Activated CD4-positive, alpha-beta memory T cell treated with anti-CD3 and anti-CD28 coated beads for 36 hours (primary cell): ENCODE measurements at regions of chr12 and their contacts with region 1.

Region 1: DNA sequence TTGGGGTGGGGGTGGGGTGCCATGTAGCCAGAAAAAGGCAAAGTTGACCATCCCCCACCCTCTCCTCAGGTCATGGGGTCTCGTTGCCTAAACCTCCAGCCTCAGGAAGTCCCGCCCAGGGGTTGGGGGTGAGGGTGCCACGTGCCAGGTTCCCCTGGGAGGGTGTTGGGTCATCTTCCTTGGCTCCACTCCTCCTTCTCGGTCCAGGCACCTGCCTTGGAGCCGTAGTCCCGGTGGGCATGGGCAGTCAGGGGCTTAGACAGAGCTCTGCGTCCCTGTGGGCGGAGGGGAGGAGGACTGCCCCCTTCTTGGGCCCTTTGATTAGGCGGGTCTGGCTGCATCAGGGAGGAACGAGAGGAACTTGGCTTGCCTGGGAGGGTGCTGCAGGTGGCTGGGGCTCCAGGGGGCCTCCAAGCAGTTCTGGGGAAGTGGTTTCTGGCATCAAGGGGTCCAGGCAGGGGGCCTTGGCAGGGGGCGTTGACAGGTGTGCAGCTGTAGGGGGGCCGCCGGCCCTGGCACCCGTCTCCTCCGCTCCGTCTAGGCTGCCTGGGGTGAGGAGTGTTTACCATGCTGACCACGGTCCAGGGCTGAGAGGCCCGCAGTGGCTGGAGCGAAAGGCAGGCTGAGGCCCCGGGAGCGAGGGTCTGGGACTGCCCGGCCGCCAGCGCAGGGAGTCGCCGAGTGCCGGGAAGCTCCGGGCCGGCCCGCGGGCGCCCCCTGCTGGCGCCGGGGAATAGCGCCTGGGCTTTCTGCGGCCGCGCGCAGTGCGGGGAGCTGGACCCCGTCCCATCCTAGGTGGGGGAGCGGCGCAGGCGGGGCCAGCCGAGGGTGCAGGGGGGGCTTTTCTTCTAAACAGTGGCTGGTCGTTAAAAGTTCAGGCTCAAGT is 7.9 kb downstream of the SETD1B start:
- DNase-seq: peak; percentile 77
- H3K4me3 Mint-ChIP-seq: peak overlapping the region; percentile 79
- H3K27ac Mint-ChIP-seq: peak overlapping the region; percentile 78
- H3K4me1 Mint-ChIP-seq: peaks cover 44% of the 10 kb centered on the region
- H3K27me3 Mint-ChIP-seq: no peaks in the 10 kb centered on the region

Region 2: GRCh38 chr12:121678716-121679580 is 132.7 kb before region 1 on chr12:
- CTCF ChIA-PET with region 1: no interaction called
- POLR2A ChIA-PET with region 1: no interaction called
- intact Hi-C with region 1: no loop called
- DNase-seq: no peak
- H3K4me3 Mint-ChIP-seq: no peak overlapping the region
- H3K27ac Mint-ChIP-seq: no peak overlapping the region
- H3K4me1 Mint-ChIP-seq: peaks cover 9% of the 10 kb centered on the region
- H3K27me3 Mint-ChIP-seq: no peaks in the 10 kb centered on the region

Region 3: DNA sequence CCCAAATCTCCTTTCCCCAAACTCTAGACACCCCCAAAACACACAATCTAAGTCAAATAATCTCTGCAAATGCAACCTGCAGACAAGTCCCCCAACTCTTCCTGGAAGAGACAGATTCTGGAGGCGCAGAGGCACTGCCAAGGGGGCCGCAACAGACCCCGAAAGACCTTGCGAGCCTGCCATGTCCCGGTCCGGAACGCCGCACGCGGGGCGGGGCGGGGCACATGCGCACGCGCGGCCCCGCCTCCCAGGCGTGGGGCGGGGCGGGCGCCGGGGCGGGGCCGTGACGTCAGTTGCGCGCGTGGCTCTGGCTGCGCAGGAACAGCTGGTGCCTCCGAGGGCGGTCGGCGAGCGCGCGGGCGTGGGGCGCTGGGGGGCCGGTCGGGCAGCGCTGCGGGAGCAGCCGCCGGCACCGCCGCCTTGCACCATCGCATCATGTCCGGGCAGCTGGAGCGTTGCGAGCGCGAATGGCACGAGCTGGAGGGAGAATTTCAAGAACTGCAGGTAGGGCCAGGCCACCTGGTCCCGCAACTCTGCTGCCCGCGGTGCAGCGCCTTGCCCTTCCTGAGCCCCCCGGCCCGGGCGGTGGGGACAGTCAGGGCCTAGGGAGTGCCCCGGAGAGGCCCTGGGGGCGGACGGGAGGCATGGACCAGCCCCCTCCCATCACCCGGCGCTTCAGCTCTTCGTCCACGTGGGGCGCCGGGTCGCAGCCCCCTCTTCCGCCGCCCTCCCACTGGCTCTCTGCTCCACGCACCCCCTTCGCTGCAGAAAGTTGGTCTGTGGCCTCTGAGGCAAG is 99.0 kb before region 1 on chr12 and contains the start of gene TMEM120B:
- CTCF ChIA-PET with region 1: interaction called, 12 read pairs
- POLR2A ChIA-PET with region 1: no interaction called
- intact Hi-C with region 1: no loop called
- DNase-seq: peak; percentile 86
- H3K4me3 Mint-ChIP-seq: peak within 1 kb of the TSS; percentile 89
- H3K27ac Mint-ChIP-seq: peak within 1 kb of the TSS; percentile 59
- H3K4me1 Mint-ChIP-seq: peaks cover 16% of the 10 kb centered on the region
- H3K27me3 Mint-ChIP-seq: no peaks in the 10 kb centered on the region
- total RNA-seq, gene TMEM120B: 8.8 to 9.5 TPM

Region 4: GRCh38 chr12:121724930-121725329 is 86.7 kb before region 1 on chr12:
- CTCF ChIA-PET with region 1: no interaction called
- POLR2A ChIA-PET with region 1: no interaction called
- intact Hi-C with region 1: no loop called
- DNase-seq: no peak
- H3K4me3 Mint-ChIP-seq: no peak overlapping the region
- H3K27ac Mint-ChIP-seq: no peak overlapping the region
- H3K4me1 Mint-ChIP-seq: no peaks in the 10 kb centered on the region
- H3K27me3 Mint-ChIP-seq: no peaks in the 10 kb centered on the region

Region 5: GRCh38 chr12:121773011-121773777 is 38.5 kb before region 1 on chr12:
- CTCF ChIA-PET with region 1: interaction called, 32 read pairs
- POLR2A ChIA-PET with region 1: interaction called, 5 read pairs
- intact Hi-C with region 1: loop called (anchors 5 kb)
- DNase-seq: peak; percentile 87
- H3K4me3 Mint-ChIP-seq: no peak overlapping the region
- H3K27ac Mint-ChIP-seq: peak overlapping the region; percentile 54
- H3K4me1 Mint-ChIP-seq: peaks cover 8% of the 10 kb centered on the region
- H3K27me3 Mint-ChIP-seq: no peaks in the 10 kb centered on the region

Region 6: GRCh38 chr12:121781998-121782979 is 29.4 kb before region 1 on chr12:
- CTCF ChIA-PET with region 1: interaction called, 856 read pairs
- POLR2A ChIA-PET with region 1: interaction called, 8 read pairs
- intact Hi-C with region 1: loop called (anchors 5 kb)
- DNase-seq: peak; percentile 88
- H3K4me3 Mint-ChIP-seq: peak overlapping the region; percentile 68
- H3K27ac Mint-ChIP-seq: peak overlapping the region; percentile 96
- H3K4me1 Mint-ChIP-seq: peaks cover 70% of the 10 kb centered on the region
- H3K27me3 Mint-ChIP-seq: no peaks in the 10 kb centered on the region

Region 7: GRCh38 chr12:121829250-121829918 is 17.7 kb after region 1 on chr12:
- CTCF ChIA-PET with region 1: interaction called, 11 read pairs
- POLR2A ChIA-PET with region 1: no interaction called
- intact Hi-C with region 1: no loop called
- DNase-seq: no peak
- H3K4me3 Mint-ChIP-seq: no peak overlapping the region
- H3K27ac Mint-ChIP-seq: no peak overlapping the region
- H3K4me1 Mint-ChIP-seq: peaks cover 13% of the 10 kb centered on the region
- H3K27me3 Mint-ChIP-seq: no peaks in the 10 kb centered on the region

Region 8: GRCh38 chr12:121839106-121839992 is 27.7 kb after region 1 on chr12:
- CTCF ChIA-PET with region 1: interaction called, 20 read pairs
- POLR2A ChIA-PET with region 1: interaction called, 3 read pairs
- intact Hi-C with region 1: no loop called
- DNase-seq: peak; percentile 100
- H3K4me3 Mint-ChIP-seq: peak overlapping the region; percentile 99
- H3K27ac Mint-ChIP-seq: peak overlapping the region; percentile 92
- H3K4me1 Mint-ChIP-seq: peaks cover 15% of the 10 kb centered on the region
- H3K27me3 Mint-ChIP-seq: no peaks in the 10 kb centered on the region

Region 9: GRCh38 chr12:121858662-121859572 is 47.2 kb after region 1 on chr12 and contains the start of gene HPD:
- CTCF ChIA-PET with region 1: no interaction called
- POLR2A ChIA-PET with region 1: no interaction called
- intact Hi-C with region 1: no loop called
- DNase-seq: no peak
- H3K4me3 Mint-ChIP-seq: no peak within 1 kb of the TSS
- H3K27ac Mint-ChIP-seq: no peak within 1 kb of the TSS
- H3K4me1 Mint-ChIP-seq: no peaks in the 10 kb centered on the region
- H3K27me3 Mint-ChIP-seq: no peaks in the 10 kb centered on the region
- total RNA-seq, gene HPD: not detected

Region 10: DNA sequence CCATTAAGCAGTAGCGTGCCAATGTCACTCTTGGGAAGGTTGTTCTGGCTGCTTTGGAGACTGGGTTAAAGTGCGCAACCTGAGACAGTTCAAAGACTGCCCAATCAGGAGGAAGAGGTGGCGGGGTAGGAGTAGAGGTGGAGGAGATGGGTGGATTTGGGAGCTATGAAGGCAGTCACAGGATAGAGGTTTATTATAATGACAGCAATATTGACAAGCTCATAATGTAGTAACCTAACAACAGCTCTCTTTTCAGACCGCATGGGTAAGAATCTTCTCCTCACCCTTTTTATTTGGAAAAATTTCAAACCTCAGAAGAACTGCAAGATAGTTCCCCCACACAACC is 71.6 kb after region 1 on chr12:
- CTCF ChIA-PET with region 1: interaction called, 46 read pairs
- POLR2A ChIA-PET with region 1: interaction called, 7 read pairs
- intact Hi-C with region 1: loop called (anchors 2 kb)
- DNase-seq: no peak
- H3K4me3 Mint-ChIP-seq: no peak overlapping the region
- H3K27ac Mint-ChIP-seq: no peak overlapping the region
- H3K4me1 Mint-ChIP-seq: peaks cover 9% of the 10 kb centered on the region
- H3K27me3 Mint-ChIP-seq: no peaks in the 10 kb centered on the region